ENCODE measurements at regions of chr15 and their contacts with region 1.

Region 1: DNA sequence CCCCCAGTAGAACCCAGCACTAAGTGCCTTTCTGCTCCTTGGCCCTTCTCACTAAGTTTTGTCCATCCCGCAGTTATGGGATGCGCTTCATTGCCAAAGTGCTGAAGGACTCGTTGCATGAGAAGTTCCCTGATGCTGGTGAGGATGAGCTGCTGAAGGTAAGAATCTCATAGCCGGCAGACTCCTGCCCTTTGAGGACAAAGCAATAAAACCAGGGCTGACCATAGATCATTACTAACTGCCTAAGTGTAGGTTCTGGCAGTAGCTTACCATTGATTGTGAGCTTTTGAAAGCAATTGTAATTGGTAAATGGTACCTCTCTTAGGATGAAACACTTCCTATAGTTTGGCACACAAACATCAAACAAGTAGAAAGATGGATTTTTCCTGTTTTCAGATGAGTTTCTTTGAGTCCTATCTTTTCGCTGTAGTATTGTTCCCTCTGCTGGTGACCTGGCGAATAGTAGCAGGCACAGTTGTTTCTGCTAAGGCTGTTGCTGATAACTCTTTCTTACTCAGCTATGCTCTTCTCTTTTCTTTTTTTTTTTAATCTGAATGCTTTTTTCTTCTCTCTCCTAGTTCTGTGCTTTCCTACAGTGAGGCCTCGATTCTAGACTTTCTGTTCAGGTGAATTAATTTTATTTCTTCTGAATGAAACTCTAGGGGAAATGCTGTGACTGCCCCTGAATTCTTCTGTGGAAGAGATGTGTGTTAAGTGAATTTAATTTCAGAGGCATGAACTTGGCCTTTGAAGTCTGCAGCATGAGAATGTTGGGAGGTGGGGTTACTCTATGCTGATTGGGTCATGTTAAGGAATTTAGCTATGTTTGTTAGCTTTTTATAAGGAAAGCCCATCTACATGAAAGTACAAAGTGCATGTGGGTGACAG is 47.4 kb upstream of the CRTC3 start:
- DNase-seq: peak; percentile 61 to 62
- H3K4me3 ChIP-seq: no peak overlapping the region
- H3K4me1 ChIP-seq: no peaks in the 10 kb centered on the region
- H3K27me3 ChIP-seq: no peaks in the 10 kb centered on the region

Region 2: DNA sequence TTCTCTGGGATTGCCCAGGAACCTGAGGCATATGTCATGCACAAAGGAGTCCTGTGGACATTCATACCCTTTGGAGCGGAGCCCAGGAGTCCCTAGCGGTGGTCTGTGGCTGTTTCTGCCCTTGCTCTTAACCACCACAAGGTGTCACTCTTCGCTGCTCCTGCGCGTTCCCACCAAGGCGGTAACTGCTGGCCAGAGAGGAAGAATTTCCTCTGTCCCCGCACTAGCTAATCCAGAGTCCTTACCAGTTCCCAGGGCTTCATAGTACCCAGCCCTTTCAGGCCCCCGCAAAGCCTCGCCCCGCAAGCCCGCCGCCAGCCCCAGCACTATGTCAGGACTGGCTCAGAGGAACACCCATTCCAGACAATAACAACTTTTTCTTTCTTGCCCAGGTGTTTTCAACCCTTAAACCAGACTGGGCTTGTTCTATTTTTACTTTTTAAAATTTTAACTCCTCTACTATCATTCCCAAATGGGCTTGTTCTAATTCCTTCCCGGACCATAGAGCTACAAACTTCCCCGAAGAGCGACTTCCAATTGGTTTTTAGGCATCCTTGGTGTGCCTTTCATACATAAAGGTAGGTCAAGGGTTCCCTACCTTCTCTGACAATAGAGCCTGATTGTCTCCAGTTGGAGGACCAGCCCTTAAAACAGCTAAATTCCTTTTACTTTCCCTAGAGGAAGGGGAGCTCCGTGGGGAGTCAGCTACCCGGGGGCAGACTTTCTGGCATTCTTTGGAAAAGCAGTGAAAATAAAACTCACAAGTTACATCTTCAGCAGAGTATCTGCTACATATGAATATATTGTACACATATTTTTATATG is 162.1 kb before region 1 on chr15:
- in situ Hi-C with region 1: loop called (anchors 5 kb)
- DNase-seq: peak; percentile 88 to 90
- H3K4me3 ChIP-seq: no peak overlapping the region
- H3K4me1 ChIP-seq: peaks cover 13% of the 10 kb centered on the region
- H3K27me3 ChIP-seq: no peaks in the 10 kb centered on the region